Spleen (tissue), 13 donors: ENCODE measurements at regions of chr10 and their contacts with region 1.

Region 1: DNA sequence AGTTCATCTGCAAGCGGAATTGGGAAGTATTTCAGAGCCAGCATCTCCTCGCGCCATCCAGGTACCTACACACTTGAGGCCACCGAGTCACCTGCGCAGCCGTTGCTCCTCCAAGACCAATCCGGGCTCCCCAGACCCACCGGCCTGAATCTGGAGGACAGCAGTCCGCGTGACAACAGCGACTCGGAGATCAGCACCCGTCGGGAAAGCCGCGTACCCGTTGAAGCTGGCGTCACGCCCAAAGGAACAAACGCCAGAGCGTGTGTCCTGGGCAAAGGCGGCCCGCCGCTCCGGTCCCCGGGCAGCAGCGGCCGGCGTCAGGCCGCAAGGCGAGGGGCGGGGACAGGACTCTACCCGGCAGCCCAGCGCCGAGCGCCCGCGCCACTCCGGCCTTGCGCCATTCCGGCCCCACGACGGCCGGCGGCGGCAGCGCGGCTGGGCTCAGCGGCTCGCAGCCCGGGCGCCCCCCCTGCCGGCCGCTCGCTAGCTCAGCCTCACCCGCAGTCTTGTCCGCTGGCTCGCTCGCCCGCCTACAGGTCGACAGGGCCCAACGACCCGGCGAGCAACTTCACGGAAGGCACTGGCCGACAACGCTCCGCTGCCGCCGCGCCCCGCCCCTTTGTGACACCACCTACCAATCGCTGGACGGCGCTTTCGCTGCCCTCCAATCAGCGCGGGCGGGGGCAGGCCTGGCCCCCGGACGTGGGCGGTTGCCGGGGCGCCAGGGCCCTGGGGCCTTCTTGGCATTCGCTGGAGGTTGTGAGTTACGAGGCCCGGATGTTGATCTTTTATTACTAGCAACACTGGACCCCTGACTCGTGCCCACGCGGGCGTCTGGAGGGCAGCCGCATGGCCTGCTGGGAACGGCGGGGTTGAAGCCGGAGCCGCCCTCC is at the start of gene ZFAND4:
- DNase-seq: peak; percentile 99
- H3K4me3 ChIP-seq: peak within 1 kb of the TSS; percentile 55 to 81 (median 68)
- H3K27ac ChIP-seq: peak within 1 kb of the TSS; percentile 87 to 96 (median 94)
- H3K4me1 ChIP-seq: peaks cover 0 to 32% (median 21%) of the 10 kb centered on the region in 6 donors
- H3K27me3 ChIP-seq: no peaks in the 10 kb centered on the region
- CTCF ChIP-seq: peak; percentile 61 to 93 (median 86)
- POLR2A ChIP-seq: peak in 1 of 3 donors; percentile 41
- total RNA-seq, gene ZFAND4: 15.9 to 27.7 (median 19.0) TPM

Region 2: GRCh38 chr10:45286980-45287379 is 385.4 kb before region 1 on chr10:
- intact Hi-C with region 1: no loop called
- DNase-seq: no peak
- H3K4me3 ChIP-seq: no peak overlapping the region
- H3K27ac ChIP-seq: no peak overlapping the region
- H3K4me1 ChIP-seq: no peaks in the 10 kb centered on the region
- H3K27me3 ChIP-seq: no peaks in the 10 kb centered on the region
- CTCF ChIP-seq: no peak
- POLR2A ChIP-seq: no peak

Region 3: GRCh38 chr10:45433716-45434469 is 238.5 kb before region 1 on chr10:
- intact Hi-C with region 1: no loop called
- DNase-seq: no peak
- H3K4me3 ChIP-seq: no peak overlapping the region
- H3K27ac ChIP-seq: peak overlapping the region in 4 of 8 donors; percentile 17 to 68 (median 44)
- H3K4me1 ChIP-seq: peaks cover 0 to 29% (median 15%) of the 10 kb centered on the region in 6 donors
- H3K27me3 ChIP-seq: peaks cover 0 to 8% (median 0%) of the 10 kb centered on the region in 7 donors
- CTCF ChIP-seq: no peak
- POLR2A ChIP-seq: no peak

Region 4: GRCh38 chr10:45483002-45483401 is 189.4 kb before region 1 on chr10:
- intact Hi-C with region 1: no loop called
- DNase-seq: no peak
- H3K4me3 ChIP-seq: no peak overlapping the region
- H3K27ac ChIP-seq: no peak overlapping the region
- H3K4me1 ChIP-seq: no peaks in the 10 kb centered on the region
- H3K27me3 ChIP-seq: no peaks in the 10 kb centered on the region
- CTCF ChIP-seq: no peak
- POLR2A ChIP-seq: no peak

Region 5: DNA sequence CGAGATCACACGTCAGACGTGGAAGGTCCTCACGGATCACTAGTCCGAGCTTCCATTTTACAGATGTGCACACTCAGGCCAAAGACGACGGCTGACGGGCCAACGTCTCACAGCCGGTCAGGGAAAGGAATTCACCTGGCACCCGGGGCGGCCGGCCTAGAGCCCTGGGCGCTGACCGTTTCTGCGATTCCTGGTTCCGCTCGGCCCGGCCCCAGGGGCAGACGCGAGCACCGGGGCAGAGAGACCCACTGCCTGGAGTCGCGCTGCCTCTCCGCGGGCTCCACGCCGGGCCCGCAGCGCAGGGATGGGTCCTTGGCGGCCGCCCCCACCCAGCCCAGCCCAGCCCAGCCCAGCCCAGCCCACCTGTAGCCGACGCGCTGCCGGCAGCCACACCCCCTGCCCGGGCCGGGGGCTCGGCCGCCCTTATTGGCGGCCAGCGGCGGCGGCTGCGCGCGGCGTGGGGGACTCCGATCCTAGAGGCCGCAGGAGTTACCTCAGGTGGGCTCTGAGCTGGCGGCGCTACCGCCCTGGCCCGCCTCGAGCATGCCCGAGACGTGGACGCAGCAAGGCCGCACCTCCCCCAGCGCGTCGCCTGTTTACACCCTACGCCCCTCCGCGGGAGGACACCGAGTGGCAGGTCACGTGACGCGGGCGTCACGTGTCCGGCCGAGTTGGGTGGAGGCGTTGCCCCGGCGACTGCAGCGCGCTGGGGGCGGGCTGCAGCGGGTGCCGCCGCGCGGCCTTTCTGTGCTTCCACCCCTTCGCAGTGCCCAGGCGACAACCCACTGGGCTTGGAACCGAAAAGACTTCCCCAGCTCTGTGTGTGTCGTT is 77.9 kb before region 1 on chr10:
- intact Hi-C with region 1: loop called (anchors 5 kb)
- DNase-seq: peak; percentile 98
- H3K4me3 ChIP-seq: peak overlapping the region; percentile 77 to 92 (median 86)
- H3K27ac ChIP-seq: peak overlapping the region; percentile 51 to 92 (median 86)
- H3K4me1 ChIP-seq: peaks cover 19 to 41% (median 31%) of the 10 kb centered on the region in 6 donors
- H3K27me3 ChIP-seq: peaks cover 0 to 9% (median 0%) of the 10 kb centered on the region in 7 donors
- CTCF ChIP-seq: peak in 7 of 11 experiments; percentile 6 to 45 (median 19)
- POLR2A ChIP-seq: peak; percentile 29 to 68 (median 31)

Region 6: GRCh38 chr10:45624724-45625123 is 47.7 kb before region 1 on chr10:
- intact Hi-C with region 1: no loop called
- DNase-seq: no peak
- H3K4me3 ChIP-seq: no peak overlapping the region
- H3K27ac ChIP-seq: no peak overlapping the region
- H3K4me1 ChIP-seq: no peaks in the 10 kb centered on the region
- H3K27me3 ChIP-seq: no peaks in the 10 kb centered on the region
- CTCF ChIP-seq: no peak
- POLR2A ChIP-seq: no peak